Activated naive CD4-positive, alpha-beta T cell treated with anti-CD3 and anti-CD28 coated beads for 36 hours (primary cell): ENCODE measurements at regions of chr1 and their contacts with region 1.

Region 1: DNA sequence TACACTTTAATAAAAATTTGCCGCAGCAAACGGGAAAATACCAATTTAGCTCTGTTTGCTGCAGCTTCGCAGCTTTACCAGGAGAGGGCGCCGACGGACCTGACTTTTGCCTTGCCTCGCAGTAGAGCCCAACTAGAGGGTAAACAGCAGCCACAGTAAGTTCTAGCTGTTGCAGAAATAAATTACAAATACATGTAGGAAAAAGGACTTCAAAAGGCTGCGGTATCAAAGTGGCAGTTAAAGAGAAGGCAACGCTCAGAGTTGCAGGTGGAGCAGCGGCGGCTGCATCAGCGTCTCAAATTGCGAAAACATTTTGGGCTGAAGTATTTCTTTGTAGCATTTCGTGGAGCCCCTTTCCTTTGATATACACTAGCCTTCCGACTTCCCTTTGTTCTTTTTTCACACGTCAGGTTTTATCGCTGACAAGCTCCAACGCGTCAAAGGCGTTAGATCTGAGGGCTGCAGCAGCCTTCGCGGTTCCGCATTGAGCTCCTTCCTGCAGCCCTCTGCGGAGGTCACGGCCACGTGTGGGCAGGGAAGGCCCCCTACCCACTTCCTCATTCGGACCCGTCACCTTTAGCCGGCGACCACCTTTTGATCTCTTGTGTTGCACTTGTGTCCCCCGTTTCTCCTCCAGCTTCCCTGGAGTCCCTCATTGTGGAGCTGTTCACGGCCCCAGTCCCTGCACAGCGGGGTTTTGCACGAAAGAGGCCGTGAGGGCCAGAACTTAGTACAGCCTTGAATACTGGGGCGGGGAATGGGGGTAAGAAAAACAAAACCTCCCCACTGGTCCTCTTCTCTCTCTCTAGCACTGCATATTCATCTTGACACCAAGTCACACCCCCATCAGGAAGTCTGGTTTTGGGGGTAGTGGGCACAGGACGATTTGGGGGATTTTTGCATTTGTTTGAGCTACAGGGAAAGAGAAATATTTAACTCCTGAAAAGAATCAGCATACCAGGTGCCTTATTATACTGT is 72.8 kb downstream of the S1PR1 start:
- DNase-seq: peak; percentile 80
- H3K4me3 Mint-ChIP-seq: peak overlapping the region; percentile 71
- H3K27ac Mint-ChIP-seq: peak overlapping the region; percentile 48
- H3K4me1 Mint-ChIP-seq: peaks cover 68% of the 10 kb centered on the region
- H3K27me3 Mint-ChIP-seq: no peaks in the 10 kb centered on the region

Region 2: GRCh38 chr1:100921109-100921706 is 388.4 kb before region 1 on chr1:
- CTCF ChIA-PET with region 1: no interaction called
- intact Hi-C with region 1: loop called (anchors 1 kb)
- DNase-seq: no peak
- H3K4me3 Mint-ChIP-seq: no peak overlapping the region
- H3K27ac Mint-ChIP-seq: peak overlapping the region; percentile 39
- H3K4me1 Mint-ChIP-seq: peaks cover 16% of the 10 kb centered on the region
- H3K27me3 Mint-ChIP-seq: no peaks in the 10 kb centered on the region

Region 3: DNA sequence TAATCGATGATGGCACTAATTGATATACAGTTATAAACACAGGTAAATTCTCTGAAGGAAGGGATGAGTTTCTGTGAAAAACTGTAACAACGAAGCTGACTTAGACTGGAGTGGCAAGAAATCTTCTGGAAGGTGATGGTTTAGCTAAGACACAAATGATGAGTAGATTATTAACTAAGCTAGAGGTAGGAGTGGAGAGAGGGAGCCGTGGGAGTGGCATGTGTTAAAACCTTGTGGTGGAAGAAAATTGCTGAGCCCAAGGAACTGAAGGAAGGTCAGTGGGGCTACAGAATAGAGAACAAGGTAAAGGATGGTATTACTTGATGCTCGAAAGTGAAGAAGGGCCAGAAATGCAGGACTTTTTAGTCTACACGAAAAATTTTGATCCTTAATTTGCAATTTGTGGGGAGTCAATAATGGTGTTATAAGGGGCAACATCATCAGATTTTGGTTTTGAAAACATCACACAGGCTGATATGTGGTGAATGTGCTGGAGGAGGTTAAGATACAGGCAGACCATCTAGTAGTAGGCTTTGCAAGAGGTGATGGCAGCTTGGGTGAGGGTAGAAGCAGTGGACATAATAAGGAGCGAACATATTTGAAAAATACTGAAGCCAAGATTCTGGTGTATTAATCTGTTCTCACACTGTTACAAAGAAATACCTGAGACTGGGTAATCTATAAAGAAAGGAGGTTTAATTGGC is 21.0 kb after region 1 on chr1:
- CTCF ChIA-PET with region 1: interaction called, 4 read pairs
- intact Hi-C with region 1: loop called (anchors 2 kb)
- DNase-seq: no peak
- H3K4me3 Mint-ChIP-seq: no peak overlapping the region
- H3K27ac Mint-ChIP-seq: no peak overlapping the region
- H3K4me1 Mint-ChIP-seq: no peaks in the 10 kb centered on the region
- H3K27me3 Mint-ChIP-seq: no peaks in the 10 kb centered on the region

Region 4: DNA sequence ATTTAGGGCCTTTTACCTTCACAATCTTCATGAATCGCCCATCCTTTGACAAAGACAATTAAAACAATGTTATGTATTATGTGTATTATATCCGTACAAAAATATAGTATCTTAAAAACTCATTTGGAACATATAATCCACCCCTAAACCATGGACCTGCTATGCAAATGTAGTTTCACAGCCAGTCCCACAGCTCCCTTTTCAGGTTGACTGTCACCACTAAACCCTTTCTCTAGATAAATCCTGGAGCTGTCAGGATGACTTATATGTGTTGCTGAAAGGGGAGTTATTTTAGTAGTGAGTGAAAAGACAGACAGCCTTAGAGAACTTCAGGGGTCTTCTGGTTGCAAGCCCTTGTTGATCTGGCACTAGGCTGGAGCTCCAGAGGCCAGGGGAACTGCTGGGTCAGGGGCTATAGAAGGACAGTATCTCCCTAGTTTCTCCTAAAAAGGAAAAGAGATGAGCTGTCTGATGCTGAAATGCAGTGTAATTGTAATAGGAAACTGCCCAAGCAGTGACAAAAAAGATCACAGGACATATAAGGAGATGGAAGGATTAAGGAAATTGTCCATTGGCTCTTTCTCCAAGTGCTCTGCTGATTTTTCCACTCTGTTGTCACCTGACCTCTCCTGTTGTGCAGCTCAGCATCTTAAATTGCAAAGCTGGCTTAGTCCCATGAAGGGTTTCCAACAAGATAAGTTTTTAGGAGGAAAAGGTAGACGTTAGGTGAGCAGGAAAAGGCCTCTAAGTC is 54.9 kb after region 1 on chr1:
- CTCF ChIA-PET with region 1: interaction called, 100 read pairs
- intact Hi-C with region 1: no loop called
- DNase-seq: no peak
- H3K4me3 Mint-ChIP-seq: no peak overlapping the region
- H3K27ac Mint-ChIP-seq: no peak overlapping the region
- H3K4me1 Mint-ChIP-seq: no peaks in the 10 kb centered on the region
- H3K27me3 Mint-ChIP-seq: no peaks in the 10 kb centered on the region

Region 5: GRCh38 chr1:101451888-101452287 is 142.3 kb after region 1 on chr1:
- CTCF ChIA-PET with region 1: interaction called, 11 read pairs
- intact Hi-C with region 1: loop called (anchors 5 kb)
- DNase-seq: peak; percentile 48
- H3K4me3 Mint-ChIP-seq: no peak overlapping the region
- H3K27ac Mint-ChIP-seq: no peak overlapping the region
- H3K4me1 Mint-ChIP-seq: peaks cover 40% of the 10 kb centered on the region
- H3K27me3 Mint-ChIP-seq: peaks cover 3% of the 10 kb centered on the region

Region 6: DNA sequence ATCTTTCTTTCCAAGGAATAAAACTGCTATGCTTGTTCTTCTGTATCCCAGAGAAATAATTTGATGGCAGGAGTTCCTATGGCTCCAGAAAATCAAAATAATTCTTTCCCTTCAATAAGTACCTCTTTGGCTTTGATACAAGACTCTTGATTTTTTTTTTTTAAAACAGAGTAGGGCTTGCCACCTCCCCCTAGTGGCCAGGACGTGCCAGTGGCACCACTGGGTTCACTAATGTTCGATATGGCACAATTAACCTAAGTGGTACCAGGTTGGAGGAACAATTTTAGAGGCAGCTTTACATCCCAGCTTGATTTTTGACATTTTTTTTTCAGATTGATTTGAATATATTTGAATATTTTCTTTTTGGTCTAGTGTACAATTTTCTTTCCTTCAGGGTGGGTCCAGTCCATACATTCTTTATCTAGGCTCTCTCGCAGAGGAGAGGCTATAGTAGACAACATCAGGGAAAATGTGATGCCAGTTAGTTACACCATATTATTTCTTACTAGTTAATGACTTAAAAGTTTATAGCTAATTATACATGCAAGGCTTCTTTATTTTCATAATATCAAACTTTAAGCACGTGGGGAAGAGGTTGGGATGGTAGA is 258.1 kb after region 1 on chr1:
- CTCF ChIA-PET with region 1: no interaction called
- intact Hi-C with region 1: loop called (anchors 1 kb)
- DNase-seq: peak; percentile 64
- H3K4me3 Mint-ChIP-seq: no peak overlapping the region
- H3K27ac Mint-ChIP-seq: no peak overlapping the region
- H3K4me1 Mint-ChIP-seq: peaks cover 3% of the 10 kb centered on the region
- H3K27me3 Mint-ChIP-seq: peaks cover 2% of the 10 kb centered on the region